ENCODE measurements at regions of chr7 and their contacts with region 1.

Region 1: DNA sequence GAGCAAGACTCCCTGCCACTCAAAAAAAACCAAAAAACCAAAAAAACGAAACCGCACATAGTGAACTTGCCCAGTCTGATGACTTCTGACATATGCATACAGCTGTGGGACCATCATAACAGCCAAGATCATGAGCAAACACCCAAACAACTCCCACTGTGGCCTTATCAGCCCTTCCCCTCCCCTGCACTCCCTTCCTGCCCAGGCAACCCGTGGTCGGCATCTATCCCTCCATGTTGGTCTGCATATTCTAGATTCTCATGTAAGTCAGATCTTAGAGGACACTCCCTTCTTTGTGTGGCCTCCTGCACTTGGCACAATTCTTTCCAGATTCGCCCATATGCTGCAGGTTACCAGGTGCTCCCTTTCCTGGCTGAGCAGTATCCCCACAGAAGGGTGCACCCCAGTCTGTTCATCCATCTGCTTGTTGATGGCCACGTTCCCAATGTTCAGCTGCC is 72.8 kb downstream of the GNA12 start:
- DNase-seq: no peak
- ATAC-seq: no peak
- H3K4me3 Mint-ChIP-seq: no peak overlapping the region
- H3K27ac Mint-ChIP-seq: peak overlapping the region; percentile 35
- H3K4me1 Mint-ChIP-seq: peaks cover 50% of the 10 kb centered on the region
- H3K27me3 Mint-ChIP-seq: no peaks in the 10 kb centered on the region
- CTCF ChIP-seq: no peak

Region 2: DNA sequence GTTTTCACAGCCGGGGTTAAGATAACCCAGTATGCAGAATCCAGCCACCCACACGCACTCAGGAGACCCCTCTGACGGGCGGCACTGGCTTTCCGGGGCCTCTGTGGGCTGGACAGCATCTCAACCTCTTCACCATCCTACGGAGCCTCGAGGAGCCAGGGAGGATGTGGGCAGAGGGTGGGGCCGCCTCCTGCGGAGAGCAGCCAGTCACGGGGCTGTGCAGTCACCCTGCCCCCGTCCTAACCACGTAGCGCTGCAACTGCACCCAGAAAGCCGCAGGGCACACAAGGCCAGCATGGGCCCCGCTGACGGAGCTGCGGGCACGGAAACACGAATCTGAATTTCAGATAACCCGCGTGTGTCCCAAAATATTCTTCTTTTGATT is 830.9 kb before region 1 on chr7:
- CTCF ChIA-PET with region 1: no interaction called
- POLR2A ChIA-PET with region 1: no interaction called
- intact Hi-C with region 1: no loop called
- DNase-seq: peak; percentile 70
- ATAC-seq: peak; percentile 97
- H3K4me3 Mint-ChIP-seq: peak overlapping the region; percentile 84
- H3K27ac Mint-ChIP-seq: peak overlapping the region; percentile 91
- H3K4me1 Mint-ChIP-seq: peaks cover 41% of the 10 kb centered on the region
- H3K27me3 Mint-ChIP-seq: no peaks in the 10 kb centered on the region
- CTCF ChIP-seq: no peak

Region 3: GRCh38 chr7:2270061-2270460 is 501.2 kb before region 1 on chr7:
- CTCF ChIA-PET with region 1: no interaction called
- POLR2A ChIA-PET with region 1: no interaction called
- intact Hi-C with region 1: no loop called
- DNase-seq: no peak
- ATAC-seq: no peak
- H3K4me3 Mint-ChIP-seq: no peak overlapping the region
- H3K27ac Mint-ChIP-seq: no peak overlapping the region
- H3K4me1 Mint-ChIP-seq: no peaks in the 10 kb centered on the region
- H3K27me3 Mint-ChIP-seq: no peaks in the 10 kb centered on the region
- CTCF ChIP-seq: no peak

Region 4: DNA sequence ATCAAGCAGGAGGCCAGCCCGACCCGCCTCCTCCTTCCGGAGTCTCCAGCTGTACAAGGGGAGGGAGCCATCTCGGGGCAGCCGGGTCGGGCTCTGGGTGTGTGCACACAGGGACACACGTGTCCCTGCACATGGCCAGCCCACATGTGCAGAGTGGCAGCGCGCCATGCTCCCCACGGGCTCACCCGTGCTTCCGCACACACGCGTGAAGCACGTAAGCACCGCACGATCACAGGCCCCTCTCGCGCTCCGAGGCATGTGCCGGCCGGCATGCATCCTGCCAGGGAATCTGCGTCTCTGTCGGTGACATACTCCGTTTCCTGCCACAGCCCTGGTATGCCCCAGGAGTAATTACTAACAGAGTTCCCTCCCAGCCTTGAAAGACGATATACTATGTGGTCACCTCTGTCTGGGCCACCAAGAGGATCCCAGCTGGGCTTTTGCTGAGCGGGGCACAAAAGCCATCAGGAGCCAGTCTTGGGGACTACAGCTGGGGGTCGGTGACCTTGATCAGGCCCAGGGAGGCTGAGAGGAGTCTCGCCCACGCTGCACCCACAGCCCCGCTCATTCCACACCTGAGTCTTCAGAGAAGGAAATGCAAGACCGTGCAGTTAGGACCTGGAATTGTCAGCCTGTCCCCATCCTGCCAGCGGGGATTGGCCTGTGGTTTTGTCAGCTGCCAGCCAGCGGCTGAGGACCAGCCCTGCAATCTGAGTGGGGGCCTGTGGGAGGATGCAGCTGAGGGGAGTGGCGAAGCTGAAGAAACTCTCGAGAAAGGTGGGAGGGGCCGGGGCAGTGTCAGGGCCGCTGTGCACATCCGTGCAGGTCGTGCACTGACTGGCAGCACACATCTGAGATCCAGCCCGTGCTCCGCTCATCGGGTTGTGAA is 262.7 kb before region 1 on chr7:
- CTCF ChIA-PET with region 1: no interaction called
- POLR2A ChIA-PET with region 1: no interaction called
- intact Hi-C with region 1: no loop called
- DNase-seq: peak; percentile 62
- ATAC-seq: peak; percentile 51
- H3K4me3 Mint-ChIP-seq: peak overlapping the region; percentile 65
- H3K27ac Mint-ChIP-seq: peak overlapping the region; percentile 95
- H3K4me1 Mint-ChIP-seq: peaks cover 68% of the 10 kb centered on the region
- H3K27me3 Mint-ChIP-seq: no peaks in the 10 kb centered on the region
- CTCF ChIP-seq: no peak

Region 5: GRCh38 chr7:2757904-2758672 is 13.2 kb before region 1 on chr7:
- CTCF ChIA-PET with region 1: interaction called, 5 read pairs
- POLR2A ChIA-PET with region 1: interaction called, 36 read pairs
- intact Hi-C with region 1: loop called (anchors 1 kb)
- DNase-seq: peak; percentile 24
- ATAC-seq: peak; percentile 82
- H3K4me3 Mint-ChIP-seq: peak overlapping the region; percentile 65
- H3K27ac Mint-ChIP-seq: peak overlapping the region; percentile 89
- H3K4me1 Mint-ChIP-seq: peaks cover 45% of the 10 kb centered on the region
- H3K27me3 Mint-ChIP-seq: no peaks in the 10 kb centered on the region
- CTCF ChIP-seq: no peak

Region 6: DNA sequence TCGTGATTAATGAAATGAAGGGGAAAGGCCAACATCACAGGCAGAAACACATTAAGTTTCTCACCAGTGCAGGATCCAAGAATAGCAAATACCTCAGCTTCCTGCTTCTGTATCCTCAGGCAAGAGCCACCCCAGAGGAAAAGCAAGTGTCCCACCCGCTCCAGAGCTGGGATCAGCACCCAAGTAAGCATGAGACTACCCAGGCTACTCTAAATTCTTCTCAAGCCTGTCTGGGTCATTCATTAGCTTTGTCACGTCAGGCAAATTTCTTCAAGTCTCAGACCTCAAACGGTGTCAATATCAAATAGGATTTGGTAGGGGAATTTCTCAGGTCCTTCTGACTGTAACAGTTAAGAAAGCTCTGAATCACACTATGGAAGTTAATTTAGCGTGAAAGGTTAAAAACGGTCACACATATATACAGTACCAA is 13.8 kb after region 1 on chr7:
- CTCF ChIA-PET with region 1: no interaction called
- POLR2A ChIA-PET with region 1: interaction called, 10 read pairs
- intact Hi-C with region 1: loop called (anchors 1 kb)
- DNase-seq: no peak
- ATAC-seq: peak; percentile 91
- H3K4me3 Mint-ChIP-seq: peak overlapping the region; percentile 56
- H3K27ac Mint-ChIP-seq: peak overlapping the region; percentile 71
- H3K4me1 Mint-ChIP-seq: peaks cover 39% of the 10 kb centered on the region
- H3K27me3 Mint-ChIP-seq: no peaks in the 10 kb centered on the region
- CTCF ChIP-seq: no peak

Region 7: DNA sequence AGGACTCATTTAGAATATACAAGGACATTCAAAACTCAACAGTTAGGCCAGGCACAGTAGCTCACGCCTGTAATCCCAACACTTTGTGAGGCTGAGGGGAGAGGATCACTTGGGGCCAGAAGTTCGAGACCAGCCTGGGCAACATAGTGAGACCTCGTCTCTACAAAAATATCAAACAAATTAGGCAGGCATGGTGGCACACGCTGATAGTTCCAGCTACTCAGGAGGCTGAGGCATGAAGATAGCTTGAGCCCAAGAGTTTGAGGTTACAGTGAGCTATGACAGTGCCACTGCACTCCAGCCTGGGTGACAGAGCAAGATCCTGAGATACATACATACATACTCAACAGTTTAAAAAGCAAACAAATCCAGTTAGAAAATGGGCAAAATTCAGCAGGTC is 27.9 kb after region 1 on chr7:
- CTCF ChIA-PET with region 1: no interaction called
- POLR2A ChIA-PET with region 1: interaction called, 5 read pairs
- intact Hi-C with region 1: loop called (anchors 1 kb)
- DNase-seq: no peak
- ATAC-seq: no peak
- H3K4me3 Mint-ChIP-seq: no peak overlapping the region
- H3K27ac Mint-ChIP-seq: peak overlapping the region; percentile 32
- H3K4me1 Mint-ChIP-seq: peaks cover 70% of the 10 kb centered on the region
- H3K27me3 Mint-ChIP-seq: no peaks in the 10 kb centered on the region
- CTCF ChIP-seq: no peak

Region 8: DNA sequence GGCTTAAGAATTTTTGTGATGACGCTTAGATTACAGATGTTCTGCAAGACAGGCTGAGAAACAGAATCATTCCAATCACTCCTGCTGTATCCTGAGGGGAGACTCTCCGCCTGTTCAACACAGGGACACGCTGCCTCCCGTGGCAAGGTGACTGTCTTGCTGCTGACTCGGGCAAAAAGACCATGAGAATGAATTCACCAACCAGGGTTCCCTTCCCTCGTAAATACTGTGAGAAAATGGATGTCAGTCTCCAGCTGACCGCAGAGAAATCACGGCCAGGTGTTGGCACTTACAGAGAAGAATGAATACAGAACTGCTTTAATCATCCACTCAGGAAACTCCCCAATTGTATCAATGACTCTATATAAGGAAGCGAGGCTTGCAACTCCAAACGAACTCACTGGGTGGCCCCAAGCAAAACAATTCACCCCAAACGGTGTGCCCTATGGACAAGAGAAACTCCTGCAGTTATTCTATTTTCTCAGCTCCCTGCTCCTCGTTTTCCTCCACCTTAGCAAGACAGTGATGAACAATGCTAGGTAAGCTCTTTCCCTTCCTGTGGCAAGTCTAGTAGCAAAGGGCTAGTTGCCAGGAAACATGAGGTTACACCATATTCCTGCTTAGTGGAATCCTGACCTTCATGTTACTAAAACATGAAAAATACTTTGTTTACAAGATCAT is 50.0 kb after region 1 on chr7:
- CTCF ChIA-PET with region 1: no interaction called
- POLR2A ChIA-PET with region 1: interaction called, 9 read pairs
- intact Hi-C with region 1: loop called (anchors 5 kb)
- DNase-seq: no peak
- ATAC-seq: peak; percentile 67
- H3K4me3 Mint-ChIP-seq: peak overlapping the region; percentile 74
- H3K27ac Mint-ChIP-seq: peak overlapping the region; percentile 85
- H3K4me1 Mint-ChIP-seq: peaks cover 67% of the 10 kb centered on the region
- H3K27me3 Mint-ChIP-seq: no peaks in the 10 kb centered on the region
- CTCF ChIP-seq: no peak

Region 9: GRCh38 chr7:2838873-2839578 is 67.7 kb after region 1 on chr7:
- CTCF ChIA-PET with region 1: no interaction called
- POLR2A ChIA-PET with region 1: interaction called, 3 read pairs
- intact Hi-C with region 1: loop called (anchors 1 kb)
- DNase-seq: no peak
- ATAC-seq: peak; percentile 91
- H3K4me3 Mint-ChIP-seq: peak overlapping the region; percentile 44
- H3K27ac Mint-ChIP-seq: peak overlapping the region; percentile 91
- H3K4me1 Mint-ChIP-seq: peaks cover 79% of the 10 kb centered on the region
- H3K27me3 Mint-ChIP-seq: no peaks in the 10 kb centered on the region
- CTCF ChIP-seq: no peak

Region 10: GRCh38 chr7:2844165-2844898 is 73.0 kb after region 1 on chr7 and contains the start of gene GNA12:
- CTCF ChIA-PET with region 1: no interaction called
- POLR2A ChIA-PET with region 1: no interaction called
- intact Hi-C with region 1: loop called (anchors 1 kb)
- DNase-seq: peak; percentile 97
- ATAC-seq: peak; percentile 93
- H3K4me3 Mint-ChIP-seq: peak within 1 kb of the TSS; percentile 87
- H3K27ac Mint-ChIP-seq: peak within 1 kb of the TSS; percentile 83
- H3K4me1 Mint-ChIP-seq: peaks cover 52% of the 10 kb centered on the region
- H3K27me3 Mint-ChIP-seq: no peaks in the 10 kb centered on the region
- CTCF ChIP-seq: no peak
- total RNA-seq, gene GNA12: 52.3 and 54.6 TPM in 2 replicates